ENCODE measurements at regions of chr10 and their contacts with region 1.

Region 1: DNA sequence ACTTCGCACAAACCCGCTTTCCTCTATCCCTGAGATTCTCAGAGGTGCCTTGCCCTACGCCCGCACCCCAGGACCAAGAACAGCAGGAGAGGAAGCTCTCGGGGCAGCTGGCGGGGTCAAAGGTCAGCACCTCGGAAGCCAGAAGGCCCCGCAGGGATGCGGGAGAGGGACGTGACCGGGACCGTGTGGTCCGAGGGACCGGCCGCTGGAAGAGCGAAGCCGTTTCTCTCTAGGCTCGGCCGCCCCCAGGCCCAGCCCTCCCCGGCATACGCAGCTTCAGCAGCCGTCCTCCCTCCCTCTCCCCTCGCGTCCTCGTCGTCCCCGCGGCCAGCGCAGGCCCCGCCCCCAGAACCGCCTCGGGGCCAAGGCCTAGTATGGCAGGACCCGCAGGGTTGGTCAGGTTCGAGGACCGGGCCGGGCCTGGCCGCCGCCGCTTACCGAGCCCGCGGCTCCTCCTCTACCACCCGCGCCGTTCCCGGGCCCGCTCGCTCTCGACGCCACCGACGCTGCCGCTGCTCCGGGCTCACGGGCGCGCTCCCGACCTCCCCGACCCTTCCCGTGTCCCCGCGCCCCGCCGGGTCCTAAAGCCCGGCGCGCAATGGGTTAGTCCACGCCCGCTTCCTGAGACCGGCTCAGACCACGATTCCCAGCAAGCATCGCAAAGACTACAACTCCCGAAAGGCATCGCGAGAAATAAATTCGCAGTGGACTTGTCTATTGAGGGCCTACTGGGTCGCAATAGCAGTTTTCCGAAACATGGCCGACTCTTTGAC is at the start of gene ARMH3:
- DNase-seq: peak; percentile 97
- H3K4me3 Mint-ChIP-seq: peak within 1 kb of the TSS; percentile 98
- H3K27ac Mint-ChIP-seq: peak within 1 kb of the TSS; percentile 95
- H3K4me1 Mint-ChIP-seq: peaks cover 28% of the 10 kb centered on the region
- H3K27me3 Mint-ChIP-seq: no peaks in the 10 kb centered on the region
- total RNA-seq, gene ARMH3: 20.9 and 23.2 TPM in 2 replicates

Region 2: DNA sequence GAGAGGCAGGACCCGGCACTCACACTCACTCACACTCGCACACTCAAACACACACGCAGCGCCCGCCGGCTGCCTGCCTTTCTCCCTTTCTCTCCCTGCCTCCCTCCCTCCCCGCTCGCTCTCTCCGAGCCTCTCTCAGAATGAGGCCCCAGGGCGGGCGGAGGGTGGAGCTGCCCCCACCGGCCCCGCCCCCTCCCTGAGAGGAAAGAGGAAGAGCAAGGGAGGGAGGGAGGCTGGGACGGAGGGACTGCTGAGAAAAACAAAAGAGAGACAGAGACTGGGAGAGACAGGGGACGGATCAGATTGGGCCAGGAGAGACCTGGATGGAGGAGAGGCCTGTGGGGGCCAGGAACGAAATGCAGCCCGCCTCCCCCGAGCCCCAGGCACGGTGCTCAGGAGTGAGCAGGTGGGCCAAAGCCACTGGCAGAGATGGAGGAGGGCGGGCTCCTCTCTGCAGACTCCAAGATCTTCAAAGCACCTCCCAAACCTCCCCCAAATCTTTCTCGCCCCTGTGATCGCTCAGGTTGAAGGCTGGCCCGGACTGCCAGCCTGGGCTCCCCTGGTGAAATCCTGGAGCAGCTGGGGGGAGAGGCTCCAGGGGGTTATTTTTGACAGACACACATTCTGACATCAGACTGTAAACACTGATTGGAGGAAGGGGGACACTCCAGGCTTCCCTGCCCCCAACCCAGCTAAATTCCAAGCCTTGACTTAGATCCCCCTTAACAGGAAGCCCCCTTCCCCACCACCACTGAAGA is 59.2 kb after region 1 on chr10:
- intact Hi-C with region 1: loop called (anchors 1 kb)
- DNase-seq: peak; percentile 94
- H3K4me3 Mint-ChIP-seq: peak overlapping the region; percentile 94
- H3K27ac Mint-ChIP-seq: peak overlapping the region; percentile 98
- H3K4me1 Mint-ChIP-seq: peaks cover 53% of the 10 kb centered on the region
- H3K27me3 Mint-ChIP-seq: no peaks in the 10 kb centered on the region

Region 3: DNA sequence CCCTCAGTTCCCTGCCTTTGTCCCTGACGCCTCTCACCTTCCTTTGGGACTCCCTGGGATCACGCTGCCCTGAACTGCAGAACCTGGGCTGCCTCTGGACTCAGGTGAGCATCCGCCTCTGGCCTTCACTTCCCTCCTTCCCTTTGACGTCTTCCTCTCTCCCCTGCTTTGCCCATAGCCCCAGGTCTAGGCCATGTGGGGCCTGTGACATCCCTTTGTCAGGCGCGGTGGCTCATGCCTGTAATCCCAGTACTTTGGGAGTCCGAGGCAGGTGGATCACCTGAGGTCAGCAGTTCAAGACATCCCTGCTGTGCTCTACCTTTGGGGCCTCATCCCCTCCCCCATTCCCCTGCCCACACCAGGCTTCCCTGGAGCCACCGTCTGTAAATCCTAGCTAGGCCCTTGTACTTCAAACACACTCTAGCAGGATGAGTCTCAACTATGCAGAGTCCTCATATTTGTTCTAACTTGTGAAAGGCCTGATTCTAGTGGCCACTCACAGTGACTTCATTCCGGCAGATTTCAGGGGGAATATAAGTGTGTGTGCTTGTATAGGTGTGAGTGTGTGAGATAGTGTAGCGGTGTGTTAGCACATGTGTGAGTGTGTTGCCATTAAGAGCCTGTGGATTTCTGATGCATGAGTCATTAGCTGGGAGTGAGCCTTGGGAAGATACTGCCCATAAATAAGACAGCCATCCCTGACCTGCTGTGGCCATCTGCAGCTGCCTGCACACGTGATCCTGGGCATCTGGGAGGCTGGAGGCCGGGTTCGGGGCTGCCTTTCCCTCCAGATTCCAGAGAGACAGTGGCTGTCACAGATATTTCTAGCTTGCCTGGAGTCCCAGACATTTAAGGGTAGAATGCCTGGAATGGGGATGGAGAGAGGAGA is 1435.9 kb after region 1 on chr10:
- intact Hi-C with region 1: no loop called
- DNase-seq: no peak
- H3K4me3 Mint-ChIP-seq: no peak overlapping the region
- H3K27ac Mint-ChIP-seq: peak overlapping the region; percentile 6
- H3K4me1 Mint-ChIP-seq: peaks cover 22% of the 10 kb centered on the region
- H3K27me3 Mint-ChIP-seq: peaks cover 55% of the 10 kb centered on the region

Region 4: GRCh38 chr10:103696411-103697145 is 1640.7 kb after region 1 on chr10:
- intact Hi-C with region 1: loop called (anchors 10 kb)
- DNase-seq: peak; percentile 93
- H3K4me3 Mint-ChIP-seq: peak overlapping the region; percentile 54
- H3K27ac Mint-ChIP-seq: peak overlapping the region; percentile 86
- H3K4me1 Mint-ChIP-seq: peaks cover 32% of the 10 kb centered on the region
- H3K27me3 Mint-ChIP-seq: peaks cover 2% of the 10 kb centered on the region

Measured in activated CD4-positive, alpha-beta T cell treated with anti-CD3 and anti-CD28 coated beads, Interleukin-2, amount 10 ng/mL, durations not matched to agents 24 days and 14 days (primary cell).